ENCODE measurements at regions of chr12 and their contacts with region 1.

Region 1: GRCh38 chr12:52327052-52327829 is 6.0 kb upstream of the KRT83 start:
- DNase-seq: peak; percentile 78
- ATAC-seq: peak; percentile 98
- H3K4me3 Mint-ChIP-seq: no peak overlapping the region
- H3K27ac Mint-ChIP-seq: no peak overlapping the region
- H3K4me1 Mint-ChIP-seq: peaks cover 4% of the 10 kb centered on the region; the same call in 1 of the 2 replicates
- H3K27me3 Mint-ChIP-seq: no peaks in the 10 kb centered on the region; the same call in 1 of the 2 replicates
- CTCF ChIP-seq: peak; percentile 26; the same call in 1 of the 2 replicates

Region 2: DNA sequence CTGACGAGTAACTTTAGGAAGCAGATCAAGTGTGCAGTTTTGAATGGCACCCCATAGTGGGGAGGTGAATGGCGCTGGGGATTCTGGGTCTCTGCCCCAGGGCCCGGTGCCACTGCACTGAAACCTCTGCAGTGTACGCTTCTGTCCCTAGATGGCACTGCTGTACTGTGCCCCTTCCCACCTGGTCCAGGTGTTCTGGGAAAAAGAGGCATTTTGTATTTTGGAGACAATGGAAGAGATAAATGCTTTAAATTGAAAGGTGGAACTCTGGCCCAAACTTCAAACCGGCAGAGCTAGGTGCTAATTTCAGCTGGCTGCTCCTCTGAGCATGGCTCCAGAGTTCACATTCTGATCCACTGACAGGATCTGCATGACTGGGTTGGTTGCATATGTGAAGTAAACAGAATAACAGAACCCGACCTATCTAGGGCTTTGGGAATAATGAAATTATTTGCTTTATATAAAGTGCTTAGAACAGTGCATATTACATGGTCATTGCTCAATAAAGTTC is 187.6 kb before region 1 on chr12:
- CTCF ChIA-PET with region 1: interaction called, 13 read pairs
- POLR2A ChIA-PET with region 1: no interaction called
- DNase-seq: peak; percentile 77
- ATAC-seq: peak; percentile 84
- H3K4me3 Mint-ChIP-seq: no peak overlapping the region
- H3K27ac Mint-ChIP-seq: 0 out of 2 replicates have a peak overlapping the region, but pooled peaks have one; percentile 35
- H3K4me1 Mint-ChIP-seq: peaks cover 30% of the 10 kb centered on the region
- H3K27me3 Mint-ChIP-seq: no peaks in the 10 kb centered on the region; the same call in none of the 2 replicates
- CTCF ChIP-seq: peak; percentile 67

Region 3: GRCh38 chr12:52213512-52214420 is 113.5 kb before region 1 on chr12:
- CTCF ChIA-PET with region 1: interaction called, 12 read pairs
- POLR2A ChIA-PET with region 1: no interaction called
- DNase-seq: peak; percentile 96
- ATAC-seq: peak; percentile 86
- H3K4me3 Mint-ChIP-seq: no peak overlapping the region
- H3K27ac Mint-ChIP-seq: no peak overlapping the region
- H3K4me1 Mint-ChIP-seq: peaks cover 12% of the 10 kb centered on the region
- H3K27me3 Mint-ChIP-seq: no peaks in the 10 kb centered on the region
- CTCF ChIP-seq: peak; percentile 81

Region 4: GRCh38 chr12:52307836-52308805 is 19.1 kb before region 1 on chr12:
- CTCF ChIA-PET with region 1: interaction called, 20 read pairs
- POLR2A ChIA-PET with region 1: no interaction called
- DNase-seq: peak; percentile 77
- ATAC-seq: peak; percentile 86
- H3K4me3 Mint-ChIP-seq: peak overlapping the region; percentile 76
- H3K27ac Mint-ChIP-seq: no peak overlapping the region
- H3K4me1 Mint-ChIP-seq: peaks cover 17% of the 10 kb centered on the region
- H3K27me3 Mint-ChIP-seq: peaks cover 57% of the 10 kb centered on the region
- CTCF ChIP-seq: no peak

Region 5: GRCh38 chr12:52344137-52344536 is 16.9 kb after region 1 on chr12:
- CTCF ChIA-PET with region 1: interaction called, 14 read pairs
- POLR2A ChIA-PET with region 1: no interaction called
- DNase-seq: no peak
- ATAC-seq: no peak
- H3K4me3 Mint-ChIP-seq: no peak overlapping the region
- H3K27ac Mint-ChIP-seq: no peak overlapping the region
- H3K4me1 Mint-ChIP-seq: no peaks in the 10 kb centered on the region
- H3K27me3 Mint-ChIP-seq: no peaks in the 10 kb centered on the region
- CTCF ChIP-seq: no peak

Region 6: GRCh38 chr12:52372216-52373154 is 45.2 kb after region 1 on chr12:
- CTCF ChIA-PET with region 1: interaction called, 12 read pairs
- POLR2A ChIA-PET with region 1: no interaction called
- DNase-seq: peak; percentile 81
- ATAC-seq: peak; percentile 91
- H3K4me3 Mint-ChIP-seq: no peak overlapping the region
- H3K27ac Mint-ChIP-seq: no peak overlapping the region
- H3K4me1 Mint-ChIP-seq: no peaks in the 10 kb centered on the region
- H3K27me3 Mint-ChIP-seq: no peaks in the 10 kb centered on the region
- CTCF ChIP-seq: peak; percentile 50; the same call in 1 of the 2 replicates